B cell (primary cell): ENCODE measurements at regions of chr4 and their contacts with region 1.

Region 1: DNA sequence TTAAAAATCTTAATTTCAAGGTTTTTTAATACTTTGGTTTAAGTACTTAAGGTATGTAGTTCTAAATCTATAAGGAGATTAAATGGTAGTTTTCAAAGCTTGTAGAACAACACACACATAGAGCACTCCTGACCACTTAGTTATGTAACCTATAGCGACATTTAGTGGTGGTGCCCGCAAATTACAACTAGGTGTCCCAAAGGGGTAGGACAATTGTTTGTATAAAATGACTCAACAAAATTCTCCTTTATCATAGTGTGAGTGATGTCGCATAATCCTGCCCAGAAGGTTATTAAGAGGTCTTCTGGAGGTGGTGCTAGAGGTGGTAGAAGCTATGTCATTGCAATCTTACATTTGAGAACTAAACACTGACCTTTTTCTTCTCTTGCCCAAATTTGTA is 373.0 kb upstream of the RASGEF1B start:
- DNase-seq: peak; percentile 83
- ATAC-seq: peak; percentile 96
- H3K4me3 ChIP-seq: no peak overlapping the region
- H3K4me3 Mint-ChIP-seq: no peak overlapping the region
- H3K27ac ChIP-seq: no peak overlapping the region
- H3K27ac Mint-ChIP-seq: no peak overlapping the region
- H3K4me1 ChIP-seq: peaks cover 0 to 2% of the 10 kb centered on the region in 2 donors
- H3K4me1 Mint-ChIP-seq: peaks cover 5% of the 10 kb centered on the region
- H3K27me3 ChIP-seq: no peaks in the 10 kb centered on the region
- H3K27me3 Mint-ChIP-seq: no peaks in the 10 kb centered on the region
- CTCF ChIP-seq: peak; percentile 87

Region 2: GRCh38 chr4:81421346-81422218 is 423.1 kb before region 1 on chr4:
- CTCF ChIA-PET with region 1: interaction called, 8 read pairs
- POLR2A ChIA-PET with region 1: no interaction called
- intact Hi-C with region 1: loop called (anchors 5 kb)
- DNase-seq: peak; percentile 83
- ATAC-seq: peak; percentile 98
- H3K4me3 ChIP-seq: no peak overlapping the region
- H3K4me3 Mint-ChIP-seq: peak overlapping the region; percentile 59
- H3K27ac ChIP-seq: peak overlapping the region; percentile 51 to 73
- H3K27ac Mint-ChIP-seq: peak overlapping the region; percentile 95
- H3K4me1 ChIP-seq: peaks cover 12 to 24% of the 10 kb centered on the region in 2 donors
- H3K4me1 Mint-ChIP-seq: peaks cover 42% of the 10 kb centered on the region
- H3K27me3 ChIP-seq: no peaks in the 10 kb centered on the region
- H3K27me3 Mint-ChIP-seq: no peaks in the 10 kb centered on the region
- CTCF ChIP-seq: no peak

Region 3: GRCh38 chr4:81454499-81454898 is 390.2 kb before region 1 on chr4:
- CTCF ChIA-PET with region 1: interaction called, 11 read pairs
- POLR2A ChIA-PET with region 1: no interaction called
- intact Hi-C with region 1: no loop called
- DNase-seq: no peak
- ATAC-seq: no peak
- H3K4me3 ChIP-seq: no peak overlapping the region
- H3K4me3 Mint-ChIP-seq: peak overlapping the region; percentile 40
- H3K27ac ChIP-seq: no peak overlapping the region
- H3K27ac Mint-ChIP-seq: peak overlapping the region; percentile 47
- H3K4me1 ChIP-seq: peaks cover 7 to 21% of the 10 kb centered on the region in 2 donors
- H3K4me1 Mint-ChIP-seq: peaks cover 55% of the 10 kb centered on the region
- H3K27me3 ChIP-seq: no peaks in the 10 kb centered on the region
- H3K27me3 Mint-ChIP-seq: no peaks in the 10 kb centered on the region
- CTCF ChIP-seq: no peak

Region 4: DNA sequence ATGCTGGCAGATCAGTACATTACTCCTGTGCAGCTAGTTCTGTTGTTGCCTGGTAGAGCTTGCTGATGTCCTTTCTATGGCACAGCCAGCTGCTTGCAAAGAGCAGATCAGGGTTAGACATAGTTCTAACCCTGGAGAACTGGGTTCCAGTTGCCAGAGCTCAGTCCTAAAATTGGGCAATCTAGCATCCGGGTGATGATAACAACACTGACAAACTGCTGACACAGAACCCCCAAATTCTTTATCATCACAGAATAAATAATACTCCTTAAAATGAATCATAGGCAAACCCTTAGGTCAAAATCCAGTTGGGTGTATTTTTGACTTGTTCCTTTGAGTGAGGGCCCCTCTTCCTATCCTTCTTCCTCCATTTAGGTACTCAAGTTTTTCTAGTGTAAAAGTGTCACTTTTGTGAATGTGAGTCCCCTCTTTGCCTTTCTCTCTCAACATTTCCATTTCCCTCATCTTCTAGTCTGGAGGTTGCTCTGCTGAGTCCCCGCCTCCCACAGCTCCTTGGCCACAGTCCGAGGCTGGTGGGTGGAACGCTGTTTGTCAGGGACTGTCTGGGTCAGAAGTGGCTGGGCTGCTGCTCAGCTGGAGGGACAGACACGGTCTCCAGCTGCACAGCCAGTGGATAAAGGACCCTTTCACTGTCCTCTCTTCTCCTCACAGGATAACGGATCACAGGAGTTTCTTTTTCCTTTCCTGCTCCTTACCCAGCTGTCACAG is 279.4 kb before region 1 on chr4:
- CTCF ChIA-PET with region 1: interaction called, 7 read pairs
- POLR2A ChIA-PET with region 1: no interaction called
- intact Hi-C with region 1: loop called (anchors 1 kb)
- DNase-seq: no peak
- ATAC-seq: no peak
- H3K4me3 ChIP-seq: peak overlapping the region in 2 of 5 experiments; percentile 5 to 6
- H3K4me3 Mint-ChIP-seq: peak overlapping the region; percentile 61
- H3K27ac ChIP-seq: peak overlapping the region; percentile 4 to 21
- H3K27ac Mint-ChIP-seq: peak overlapping the region; percentile 64
- H3K4me1 ChIP-seq: peaks cover 54 to 65% of the 10 kb centered on the region in 2 donors
- H3K4me1 Mint-ChIP-seq: peaks cover 59% of the 10 kb centered on the region
- H3K27me3 ChIP-seq: no peaks in the 10 kb centered on the region
- H3K27me3 Mint-ChIP-seq: no peaks in the 10 kb centered on the region
- CTCF ChIP-seq: no peak

Region 5: DNA sequence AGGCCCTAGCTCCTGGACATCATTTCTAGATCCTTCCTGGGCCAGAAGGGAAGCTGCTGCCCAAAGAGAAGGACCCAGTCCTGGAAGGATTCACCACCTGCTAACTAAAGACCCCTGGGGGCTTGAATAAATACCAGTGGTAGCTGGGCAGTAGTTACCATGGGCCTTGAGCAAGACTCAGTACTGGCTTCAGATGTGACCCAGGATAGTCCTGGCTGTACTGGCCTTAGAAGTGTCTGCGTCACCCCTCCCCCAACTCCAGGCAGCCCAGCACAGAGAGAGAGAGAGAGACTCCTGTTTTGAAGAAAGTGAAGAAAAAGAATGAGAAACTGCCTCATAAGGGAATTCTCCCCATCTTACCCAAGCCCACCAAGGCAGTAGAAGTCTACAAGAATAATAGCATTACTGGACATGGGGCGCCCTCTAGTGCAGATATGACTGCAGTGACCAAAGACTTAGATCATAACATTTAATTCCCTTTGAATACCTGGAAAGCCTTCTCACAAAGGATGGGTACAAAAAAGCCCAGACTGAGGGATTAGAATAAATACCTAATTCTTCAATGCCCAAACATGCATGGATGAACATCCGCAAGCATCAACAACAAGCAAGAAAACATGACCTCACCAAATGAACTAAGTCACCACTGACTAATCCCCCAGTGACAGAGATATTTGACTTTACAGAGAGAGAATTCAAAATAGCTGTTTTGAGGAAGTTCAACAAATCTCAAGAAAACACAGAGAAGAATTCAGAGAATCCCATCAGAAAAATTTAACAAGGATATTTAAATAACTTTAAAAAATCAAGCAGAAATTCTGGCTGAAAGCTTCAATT is 357.3 kb after region 1 on chr4:
- CTCF ChIA-PET with region 1: interaction called, 6 read pairs
- POLR2A ChIA-PET with region 1: no interaction called
- intact Hi-C with region 1: loop called (anchors 1 kb)
- DNase-seq: peak; percentile 69
- ATAC-seq: peak; percentile 43
- H3K4me3 ChIP-seq: no peak overlapping the region
- H3K4me3 Mint-ChIP-seq: no peak overlapping the region
- H3K27ac ChIP-seq: no peak overlapping the region
- H3K27ac Mint-ChIP-seq: no peak overlapping the region
- H3K4me1 ChIP-seq: no peaks in the 10 kb centered on the region
- H3K4me1 Mint-ChIP-seq: no peaks in the 10 kb centered on the region
- H3K27me3 ChIP-seq: no peaks in the 10 kb centered on the region
- H3K27me3 Mint-ChIP-seq: peaks cover 16% of the 10 kb centered on the region
- CTCF ChIP-seq: peak; percentile 85

Region 6: GRCh38 chr4:82360298-82361177 is 515.8 kb after region 1 on chr4:
- CTCF ChIA-PET with region 1: interaction called, 3 read pairs
- POLR2A ChIA-PET with region 1: no interaction called
- intact Hi-C with region 1: loop called (anchors 5 kb)
- DNase-seq: peak; percentile 66
- ATAC-seq: peak; percentile 65
- H3K4me3 ChIP-seq: no peak overlapping the region
- H3K4me3 Mint-ChIP-seq: no peak overlapping the region
- H3K27ac ChIP-seq: peak overlapping the region in 1 of 2 donors; percentile 69
- H3K27ac Mint-ChIP-seq: peak overlapping the region; percentile 74
- H3K4me1 ChIP-seq: peaks cover 37 to 67% of the 10 kb centered on the region in 2 donors
- H3K4me1 Mint-ChIP-seq: peaks cover 75% of the 10 kb centered on the region
- H3K27me3 ChIP-seq: no peaks in the 10 kb centered on the region
- H3K27me3 Mint-ChIP-seq: no peaks in the 10 kb centered on the region
- CTCF ChIP-seq: peak; percentile 85